Dorsolateral prefrontal cortex (tissue), 120 donors: ENCODE measurements at regions of chr7 and their contacts with region 1.

Region 1: DNA sequence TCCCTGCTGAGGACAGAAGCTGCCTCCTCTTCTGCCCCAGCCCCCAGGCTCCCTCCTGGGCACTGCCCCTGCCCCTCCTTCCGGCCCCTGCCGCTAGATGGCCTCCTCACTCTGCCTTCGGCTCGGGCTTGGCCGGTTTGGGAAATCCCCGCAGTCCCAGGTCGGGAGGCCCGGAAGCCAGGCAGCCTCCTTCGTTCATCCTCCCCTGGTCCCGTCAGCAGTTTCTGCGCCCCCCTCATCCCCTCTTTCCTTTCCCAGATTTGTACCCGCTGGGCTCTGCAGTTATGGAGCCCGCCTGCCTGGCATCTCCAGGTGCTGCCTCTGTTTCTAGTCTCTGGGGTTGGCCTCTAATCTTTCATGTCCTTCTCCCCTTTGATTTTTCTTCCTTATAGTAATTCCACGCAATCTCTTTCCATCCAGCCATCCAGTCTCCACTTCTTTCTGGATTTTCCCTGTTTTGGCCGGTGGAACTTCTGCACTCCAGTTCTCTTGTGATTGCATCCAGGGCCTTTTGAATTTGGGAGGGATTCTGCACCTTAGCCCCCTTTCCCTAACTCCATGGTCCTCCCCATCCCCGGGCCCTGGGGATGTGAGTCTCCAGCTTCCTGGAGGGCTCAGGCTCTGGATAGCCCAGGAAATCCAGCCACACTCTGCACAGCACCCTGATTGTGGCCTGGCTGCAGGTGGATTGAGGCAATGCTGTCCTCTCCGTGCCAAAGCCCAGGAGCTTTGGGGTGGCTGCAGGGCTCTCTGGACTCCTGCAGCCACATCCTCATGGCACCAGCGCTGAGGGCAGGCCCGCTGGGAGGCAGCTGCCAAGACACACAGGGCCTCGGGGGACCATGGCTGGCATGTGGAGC is 3.3 kb upstream of the SHH start:
- DNase-seq: peak in 5 of 10 donors; percentile 29 to 67 (median 55)
- H3K4me3 ChIP-seq: no peak overlapping the region
- H3K27ac ChIP-seq: no peak overlapping the region
- H3K27me3 ChIP-seq: peaks cover 0 to 92% (median 54%) of the 10 kb centered on the region in 45 donors
- CTCF ChIP-seq: peak in 54 of 56 donors; percentile 33 to 72 (median 54)

Region 2: GRCh38 chr7:155965015-155965414 is 149.5 kb after region 1 on chr7:
- intact Hi-C with region 1: no loop called
- DNase-seq: peak in 1 of 10 donors; percentile 12
- H3K4me3 ChIP-seq: no peak overlapping the region
- H3K27ac ChIP-seq: no peak overlapping the region
- H3K27me3 ChIP-seq: peaks cover 0 to 27% (median 8%) of the 10 kb centered on the region in 45 donors
- CTCF ChIP-seq: no peak

Region 3: GRCh38 chr7:156473476-156474240 is 658.1 kb after region 1 on chr7:
- intact Hi-C with region 1: loop called (anchors 5 kb)
- DNase-seq: peak in 7 of 10 donors; percentile 26 to 74 (median 57)
- H3K4me3 ChIP-seq: no peak overlapping the region
- H3K27ac ChIP-seq: no peak overlapping the region
- H3K27me3 ChIP-seq: peaks cover 0 to 4% (median 0%) of the 10 kb centered on the region in 45 donors
- CTCF ChIP-seq: peak; percentile 33 to 82 (median 67)

Region 4: DNA sequence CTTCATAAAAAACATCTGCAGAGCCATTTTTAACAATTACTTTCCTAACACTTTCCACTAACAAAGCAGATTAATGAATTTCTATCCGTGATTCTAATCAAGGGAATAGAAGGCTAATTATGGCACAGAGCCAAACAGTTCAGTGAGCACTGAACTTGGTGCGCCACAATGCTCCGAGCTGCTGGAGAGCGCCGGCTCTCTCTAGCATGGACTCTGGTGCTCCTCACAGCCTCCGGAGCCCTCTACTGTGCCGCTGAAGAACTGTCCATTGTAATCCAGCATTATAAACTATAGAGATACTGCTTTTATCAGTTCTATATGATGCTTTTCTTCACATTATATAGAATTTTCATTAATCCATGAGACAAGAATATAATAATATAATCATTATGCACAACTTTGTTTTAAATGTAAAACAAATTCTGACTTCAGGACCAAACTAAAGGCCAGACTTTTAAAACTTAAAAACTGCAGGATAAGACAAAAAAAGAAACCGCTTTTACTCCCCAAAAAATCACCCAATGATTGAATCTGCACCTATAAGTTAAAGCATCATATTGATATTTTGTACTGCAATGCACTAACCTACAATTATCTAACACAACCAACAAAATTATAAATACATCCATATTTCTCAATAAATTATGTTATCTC is 948.6 kb after region 1 on chr7:
- intact Hi-C with region 1: loop called in 1 of 2 experiments (anchors 5 kb)
- DNase-seq: peak; percentile 47 to 80 (median 76)
- H3K4me3 ChIP-seq: no peak overlapping the region
- H3K27ac ChIP-seq: no peak overlapping the region
- H3K27me3 ChIP-seq: no peaks in the 10 kb centered on the region
- CTCF ChIP-seq: peak; percentile 22 to 98 (median 80)